ENCODE measurements at regions of chr3 and their contacts with region 1.

Region 1: GRCh38 chr3:29515451-29515850 is 234.6 kb downstream of the RBMS3 start:
- DNase-seq: no peak
- H3K4me3 ChIP-seq: no peak overlapping the region
- H3K27ac ChIP-seq: peak overlapping the region in 1 of 3 donors; percentile 26
- H3K4me1 ChIP-seq: peaks cover 32 to 51% of the 10 kb centered on the region in 2 donors
- H3K27me3 ChIP-seq: no peaks in the 10 kb centered on the region
- CTCF ChIP-seq: no peak
- POLR2A ChIP-seq: no peak

Region 2: DNA sequence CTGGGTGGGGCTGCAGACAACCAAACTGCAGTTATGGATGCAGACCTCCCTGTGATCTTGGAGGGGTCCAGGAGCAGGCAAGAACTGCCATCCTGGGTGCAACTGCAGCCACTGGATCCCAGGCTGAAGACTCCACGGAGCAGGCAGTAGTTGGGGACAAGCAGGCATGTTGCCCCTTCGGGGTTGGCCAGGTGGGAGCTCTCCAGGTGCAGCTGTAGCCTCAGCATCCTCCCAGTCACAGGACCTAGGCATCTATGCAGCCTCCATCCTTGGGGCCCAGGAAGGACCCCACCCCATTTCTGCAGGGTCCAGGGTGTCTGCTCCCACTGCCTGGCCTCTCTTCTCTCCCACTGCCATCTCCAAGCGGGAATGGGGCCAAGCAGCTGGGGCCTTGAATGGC is 556.8 kb before region 1 on chr3:
- intact Hi-C with region 1: no loop called
- DNase-seq: no peak
- H3K4me3 ChIP-seq: no peak overlapping the region
- H3K27ac ChIP-seq: no peak overlapping the region
- H3K4me1 ChIP-seq: no peaks in the 10 kb centered on the region
- H3K27me3 ChIP-seq: no peaks in the 10 kb centered on the region
- CTCF ChIP-seq: no peak
- POLR2A ChIP-seq: no peak

Region 3: DNA sequence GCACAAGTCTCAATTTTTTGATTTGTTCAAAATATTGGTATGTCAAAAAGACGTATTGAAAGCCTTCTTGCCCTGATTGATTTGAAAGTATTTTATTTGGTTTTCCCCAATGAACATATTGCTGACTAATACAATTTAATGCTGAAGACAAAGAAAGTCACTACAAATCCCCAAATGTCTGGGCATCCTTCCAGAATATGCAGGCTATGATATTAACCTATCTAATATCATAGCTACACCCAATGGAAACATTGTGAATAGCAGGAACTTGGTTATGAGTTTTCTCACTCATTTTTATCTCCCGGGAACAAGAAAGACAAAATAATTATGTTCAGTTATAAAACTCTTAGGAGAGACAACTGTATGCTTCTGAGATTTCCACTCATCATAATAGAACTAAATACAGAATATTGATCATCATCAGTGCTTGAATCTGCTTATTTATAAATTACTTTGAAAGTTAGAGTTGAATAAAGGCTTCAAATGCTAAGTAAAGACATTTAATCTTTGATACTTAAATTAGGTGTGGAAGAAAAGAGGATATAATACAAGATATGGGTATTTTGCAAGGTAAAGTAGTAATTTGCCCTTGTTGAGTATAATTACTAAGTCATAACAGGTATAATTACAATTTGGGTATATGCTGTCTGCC is 249.3 kb after region 1 on chr3:
- intact Hi-C with region 1: loop called (anchors 10 kb)
- DNase-seq: peak in 1 of 2 donors; percentile 8
- H3K4me3 ChIP-seq: no peak overlapping the region
- H3K27ac ChIP-seq: no peak overlapping the region
- H3K4me1 ChIP-seq: peaks cover 8 to 17% of the 10 kb centered on the region in 2 donors
- H3K27me3 ChIP-seq: no peaks in the 10 kb centered on the region
- CTCF ChIP-seq: peak in 5 of 6 experiments; percentile 21 to 78 (median 62)
- POLR2A ChIP-seq: no peak